CD8-positive, alpha-beta T cell (primary cell): ENCODE measurements at regions of chr3 and their contacts with region 1.

Region 1: DNA sequence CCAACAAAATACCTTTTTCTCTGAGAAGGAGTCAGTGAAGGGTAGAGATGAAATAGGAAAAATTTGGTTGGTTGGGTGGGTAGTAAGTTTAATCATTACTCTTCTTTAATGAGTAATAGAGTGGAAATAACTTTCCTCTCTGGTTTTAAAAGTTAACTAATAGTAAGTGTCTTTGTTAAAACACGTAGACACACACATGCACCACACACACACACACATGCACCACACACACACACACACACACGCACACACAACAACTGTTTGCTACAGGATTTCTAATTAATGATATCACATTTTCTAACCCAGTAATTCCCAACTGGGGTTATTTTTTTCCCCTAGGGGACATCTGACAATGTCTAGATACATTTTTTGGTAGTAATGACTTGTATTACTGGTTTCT is 84.1 kb downstream of the CHL1 start:
- DNase-seq: no peak
- ATAC-seq: no peak
- H3K4me3 ChIP-seq: no peak overlapping the region
- H3K4me3 Mint-ChIP-seq: no peak overlapping the region
- H3K27ac ChIP-seq: no peak overlapping the region
- H3K27ac Mint-ChIP-seq: no peak overlapping the region
- H3K4me1 ChIP-seq: no peaks in the 10 kb centered on the region
- H3K4me1 Mint-ChIP-seq: no peaks in the 10 kb centered on the region
- H3K27me3 ChIP-seq: no peaks in the 10 kb centered on the region
- H3K27me3 Mint-ChIP-seq: no peaks in the 10 kb centered on the region
- CTCF ChIP-seq: no peak

Region 2: DNA sequence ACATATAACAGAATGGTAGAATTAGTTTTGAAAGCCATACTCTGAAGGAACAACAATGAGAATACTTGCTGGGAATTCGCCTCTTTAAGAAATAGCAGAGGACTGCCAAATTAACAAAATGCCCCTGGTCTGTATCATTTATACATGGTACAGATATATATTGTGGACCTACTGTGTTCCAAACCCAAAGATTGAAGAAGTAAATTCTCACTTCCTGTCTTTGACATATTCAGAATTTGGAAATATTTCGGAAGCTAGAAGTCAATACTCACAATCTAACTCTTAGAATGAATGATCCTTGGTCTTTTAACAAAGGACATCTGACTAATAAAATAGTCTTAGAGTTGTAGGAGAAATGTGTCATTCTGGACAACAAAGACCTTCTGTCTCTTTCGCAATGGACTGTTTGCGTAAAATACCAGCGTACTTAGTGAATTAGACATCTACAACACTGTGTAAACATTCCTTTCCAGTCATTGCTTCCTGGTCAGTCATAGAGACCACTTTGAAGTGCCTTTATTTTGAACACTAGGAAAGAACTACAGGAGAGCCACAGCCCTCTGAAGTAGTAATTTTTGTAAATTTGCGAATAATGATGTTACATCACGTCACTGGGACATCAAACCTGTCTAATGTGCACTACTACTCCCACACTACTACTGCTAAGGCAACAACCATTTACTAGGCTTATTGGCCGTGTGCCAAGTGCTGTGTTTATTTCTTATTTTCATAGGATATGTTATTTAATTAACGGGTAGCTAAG is 16.1 kb before region 1 on chr3:
- CTCF ChIA-PET with region 1: no interaction called
- POLR2A ChIA-PET with region 1: no interaction called
- intact Hi-C with region 1: loop called in 1 of 2 experiments (anchors 1 kb)
- DNase-seq: no peak
- ATAC-seq: no peak
- H3K4me3 ChIP-seq: no peak overlapping the region
- H3K4me3 Mint-ChIP-seq: no peak overlapping the region
- H3K27ac ChIP-seq: no peak overlapping the region
- H3K27ac Mint-ChIP-seq: no peak overlapping the region
- H3K4me1 ChIP-seq: no peaks in the 10 kb centered on the region
- H3K4me1 Mint-ChIP-seq: no peaks in the 10 kb centered on the region
- H3K27me3 ChIP-seq: no peaks in the 10 kb centered on the region
- H3K27me3 Mint-ChIP-seq: no peaks in the 10 kb centered on the region
- CTCF ChIP-seq: no peak

Region 3: DNA sequence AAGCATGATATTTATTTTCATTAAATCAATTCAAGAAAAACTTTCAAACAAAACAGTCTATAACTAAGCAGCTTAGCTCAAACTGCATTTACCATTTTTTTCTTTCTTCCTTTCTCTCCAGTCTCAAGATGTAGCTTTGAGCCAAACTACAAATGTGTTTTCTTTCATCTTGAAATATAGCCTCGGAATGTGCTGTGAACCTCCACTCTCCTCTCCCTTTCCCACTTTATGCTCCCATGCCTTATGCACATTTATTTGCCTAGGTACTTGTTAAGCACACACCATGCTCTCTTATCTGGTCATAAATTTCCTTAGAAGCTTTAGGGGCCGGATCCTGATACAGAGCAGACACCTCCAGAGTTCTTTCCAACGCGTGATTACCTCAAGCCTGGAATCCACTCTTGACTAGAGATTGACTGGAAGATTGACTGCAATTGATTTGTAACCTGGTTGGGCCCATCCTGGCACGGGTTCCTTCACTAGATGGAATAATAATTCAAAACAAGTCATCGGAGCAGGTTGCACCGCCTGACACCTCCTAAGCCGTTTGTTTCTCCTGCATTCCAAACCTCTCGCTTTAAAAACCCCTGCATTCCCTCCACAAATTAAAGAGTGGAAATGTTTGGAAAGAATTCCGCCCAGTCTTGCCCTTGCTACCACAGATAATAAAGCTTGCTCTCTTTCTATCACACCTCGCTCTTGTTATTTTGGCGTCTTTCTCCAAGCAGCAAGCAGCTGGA is 260.5 kb after region 1 on chr3:
- CTCF ChIA-PET with region 1: no interaction called
- POLR2A ChIA-PET with region 1: no interaction called
- intact Hi-C with region 1: no loop called
- DNase-seq: no peak
- ATAC-seq: no peak
- H3K4me3 ChIP-seq: no peak overlapping the region
- H3K4me3 Mint-ChIP-seq: no peak overlapping the region
- H3K27ac ChIP-seq: no peak overlapping the region
- H3K27ac Mint-ChIP-seq: no peak overlapping the region
- H3K4me1 ChIP-seq: no peaks in the 10 kb centered on the region
- H3K4me1 Mint-ChIP-seq: no peaks in the 10 kb centered on the region
- H3K27me3 ChIP-seq: no peaks in the 10 kb centered on the region
- H3K27me3 Mint-ChIP-seq: no peaks in the 10 kb centered on the region
- CTCF ChIP-seq: no peak